Cardiac septum (tissue), 1 donor: ENCODE measurements at regions of chr1 and their contacts with region 1.

Region 1: DNA sequence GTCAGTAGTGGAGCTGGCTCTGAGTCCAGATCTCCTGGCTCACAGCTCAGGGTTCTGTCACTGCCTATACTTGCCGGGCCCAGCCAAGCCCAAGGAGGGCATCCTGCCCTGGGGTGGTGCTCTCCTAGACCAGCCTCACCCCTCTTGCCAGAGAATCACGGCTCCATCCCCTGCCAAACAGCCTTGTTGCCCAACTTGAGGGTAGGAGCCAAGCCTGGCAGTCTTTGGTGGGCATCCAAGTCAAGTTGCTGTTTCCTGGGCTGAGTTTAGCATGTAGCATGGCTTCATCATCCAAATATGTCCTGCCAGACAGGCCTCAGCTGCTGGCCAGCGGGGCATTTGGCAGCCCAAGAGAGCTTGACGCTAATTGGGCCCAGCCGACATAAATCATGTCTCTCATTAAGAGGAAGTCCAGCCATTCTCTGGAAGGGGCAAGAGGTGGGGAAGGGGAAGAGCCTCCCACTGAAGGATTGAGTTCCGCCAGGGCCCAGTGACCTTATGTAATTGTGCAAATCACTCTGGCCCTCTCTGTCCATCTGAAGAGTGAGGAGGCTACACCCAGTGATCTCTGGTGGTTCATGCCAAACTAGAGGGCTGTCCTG is 22.6 kb upstream of the TRABD2B start:
- DNase-seq: peak; percentile 85

Region 2: DNA sequence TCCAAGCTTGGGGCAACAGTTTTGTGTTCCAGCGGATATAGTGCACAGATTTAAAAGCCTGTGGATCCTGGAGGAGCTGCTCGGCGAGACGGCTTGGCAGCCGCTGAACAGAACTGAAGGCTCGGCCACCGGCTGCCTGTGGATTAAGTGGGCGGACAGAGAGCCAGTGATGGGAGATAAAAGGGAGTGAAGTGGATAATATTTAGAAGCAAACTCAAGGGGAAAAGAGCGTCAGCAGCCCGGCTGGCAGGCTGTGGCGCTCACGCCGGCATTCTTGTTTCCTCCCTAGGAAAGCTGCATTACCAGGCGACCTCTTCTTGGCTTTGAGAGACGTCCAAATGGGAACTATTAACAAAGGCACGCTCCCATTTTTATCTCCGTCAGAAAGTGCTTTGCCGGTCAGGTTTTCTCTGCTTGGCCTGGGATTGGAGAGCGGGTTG is 33.0 kb before region 1 on chr1:
- intact Hi-C with region 1: loop called (anchors 1 kb)
- DNase-seq: peak; percentile 82

Region 3: GRCh38 chr1:48047116-48047515 is 27.3 kb after region 1 on chr1:
- intact Hi-C with region 1: loop called (anchors 2 kb)
- DNase-seq: no peak